PC-9 (cell line): ENCODE measurements at regions of chr1 and their contacts with region 1.

Region 1: DNA sequence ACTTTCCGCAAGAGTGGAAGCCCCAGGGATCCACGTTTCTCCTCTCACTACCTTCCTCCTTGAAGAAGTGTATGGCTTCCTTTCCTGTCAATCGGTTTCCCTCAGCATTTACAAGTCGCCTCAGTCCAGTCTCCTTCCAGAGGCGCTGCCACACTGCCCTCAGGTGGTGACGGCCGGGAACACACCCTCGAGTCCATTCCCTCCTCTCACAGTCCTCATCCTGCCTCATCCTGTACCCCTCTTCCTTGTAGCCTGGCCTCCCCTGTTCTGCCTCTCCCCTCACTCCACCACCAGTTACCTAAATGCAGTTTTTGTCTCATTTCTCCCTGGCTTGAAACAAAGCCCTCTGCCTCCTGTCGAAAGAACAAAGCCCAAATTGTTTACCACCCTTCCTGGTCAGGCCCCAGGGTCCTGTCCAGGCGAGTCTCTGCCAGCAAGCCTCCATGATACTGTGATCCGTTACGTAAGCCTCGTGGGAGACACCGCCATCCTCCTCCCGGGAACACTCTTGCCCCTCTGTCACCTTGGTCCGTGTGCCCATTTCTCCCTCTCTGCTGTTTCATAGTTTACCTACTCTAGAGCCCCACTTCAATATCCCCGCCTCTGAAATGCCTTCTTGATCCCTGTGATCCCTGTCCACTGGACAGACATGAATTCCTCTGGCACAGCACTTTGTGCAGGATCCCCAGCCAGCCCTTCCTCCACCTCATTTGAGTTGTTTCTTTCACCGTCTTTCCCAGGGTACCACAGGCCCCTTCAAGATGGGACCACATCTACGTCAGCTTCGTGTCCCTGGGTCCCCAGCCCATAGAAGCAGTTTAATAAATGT is 23.3 kb upstream of the LSM10 start:
- DNase-seq: peak; percentile 72 to 93
- H3K4me3 ChIP-seq: no peak overlapping the region
- H3K27ac ChIP-seq: no peak overlapping the region
- H3K4me1 ChIP-seq: peaks cover 23% of the 10 kb centered on the region
- H3K27me3 ChIP-seq: no peaks in the 10 kb centered on the region
- CTCF ChIP-seq: peak; percentile 91

Region 2: GRCh38 chr1:35769759-35770446 is 651.1 kb before region 1 on chr1 and contains the start of gene CLSPN:
- CTCF ChIA-PET with region 1: interaction called, 19 read pairs
- POLR2A ChIA-PET with region 1: no interaction called
- intact Hi-C with region 1: no loop called
- DNase-seq: peak; percentile 90 to 98
- H3K4me3 ChIP-seq: peak within 1 kb of the TSS; percentile 99
- H3K27ac ChIP-seq: no peak within 1 kb of the TSS
- H3K4me1 ChIP-seq: peaks cover 5% of the 10 kb centered on the region; the same call in 1 of the 2 replicates
- H3K27me3 ChIP-seq: no peaks in the 10 kb centered on the region
- CTCF ChIP-seq: no peak
- total RNA-seq, gene CLSPN: 18.9 and 26.7 TPM in 2 replicates

Region 3: DNA sequence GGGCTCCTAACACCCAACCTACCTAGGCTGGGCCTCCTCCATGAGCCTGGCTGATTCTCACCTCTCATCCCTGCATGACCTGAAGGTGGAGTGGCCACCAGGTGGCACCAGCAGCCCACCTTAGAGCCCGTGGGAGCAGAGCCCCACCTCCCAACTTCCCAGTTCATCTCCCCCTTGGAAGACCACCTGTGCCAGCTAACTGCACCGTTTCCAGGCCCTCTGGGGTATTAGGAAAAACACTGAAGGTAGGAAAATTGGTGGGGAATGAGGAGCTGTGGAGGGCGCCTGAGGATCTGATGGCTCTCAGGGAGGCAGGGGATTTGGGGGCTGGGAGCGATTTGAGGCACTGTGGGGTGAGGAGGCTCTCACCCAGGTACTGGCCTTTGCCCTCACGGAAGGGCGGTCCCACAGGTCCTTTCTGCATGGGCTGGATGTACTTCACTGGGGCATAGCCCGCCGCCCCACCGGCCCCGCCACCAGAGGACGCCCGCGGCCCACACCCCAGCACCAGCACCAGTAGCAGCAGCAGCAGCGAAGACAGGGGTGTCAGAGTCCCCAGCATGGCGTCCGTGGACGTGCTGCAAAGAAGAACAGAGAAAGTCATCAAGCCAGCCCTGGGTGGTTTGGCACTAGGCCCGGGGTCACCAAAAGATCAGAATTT is 321.2 kb before region 1 on chr1:
- CTCF ChIA-PET with region 1: interaction called, 14 read pairs
- POLR2A ChIA-PET with region 1: no interaction called
- intact Hi-C with region 1: loop called (anchors 1 kb)
- DNase-seq: peak; percentile 71 to 94
- H3K4me3 ChIP-seq: no peak overlapping the region
- H3K27ac ChIP-seq: no peak overlapping the region
- H3K4me1 ChIP-seq: peaks cover 4% of the 10 kb centered on the region; the same call in 1 of the 2 replicates
- H3K27me3 ChIP-seq: no peaks in the 10 kb centered on the region
- CTCF ChIP-seq: peak; percentile 91

Region 4: DNA sequence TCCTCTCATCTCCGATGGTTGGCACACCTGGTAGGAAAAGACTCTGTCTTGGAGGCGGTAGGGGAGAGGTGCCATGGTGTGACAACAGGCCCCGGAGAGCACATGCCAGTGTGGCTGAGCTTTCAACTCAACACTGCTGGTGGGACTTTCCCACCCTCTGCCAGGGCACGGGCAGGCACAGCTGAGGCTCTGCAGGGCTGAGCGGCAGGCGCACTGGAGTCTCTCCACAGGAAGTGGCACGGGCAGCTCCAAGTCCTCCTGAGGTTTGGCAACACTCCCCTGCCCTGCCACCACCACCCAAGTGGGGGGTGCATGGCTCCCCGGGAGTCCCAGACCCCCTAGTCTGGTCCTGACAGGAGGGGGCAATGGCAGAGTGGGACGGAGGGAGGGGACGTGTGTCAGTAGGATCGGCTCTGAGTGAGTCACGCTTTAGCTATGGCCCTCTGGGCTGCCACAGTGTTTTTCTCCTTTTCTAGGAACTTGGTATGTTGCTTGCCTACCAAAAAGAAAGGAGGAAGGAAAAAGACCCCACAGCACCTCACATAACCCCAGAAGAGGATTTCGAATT is 70.3 kb before region 1 on chr1:
- CTCF ChIA-PET with region 1: no interaction called
- POLR2A ChIA-PET with region 1: no interaction called
- intact Hi-C with region 1: loop called (anchors 2 kb)
- DNase-seq: peak; percentile 89 to 91
- H3K4me3 ChIP-seq: peak overlapping the region; percentile 41; the same call in 1 of the 2 replicates
- H3K27ac ChIP-seq: peak overlapping the region; percentile 97
- H3K4me1 ChIP-seq: peaks cover 67% of the 10 kb centered on the region
- H3K27me3 ChIP-seq: no peaks in the 10 kb centered on the region
- CTCF ChIP-seq: no peak

Region 5: GRCh38 chr1:36442310-36442709 is 21.3 kb after region 1 on chr1:
- CTCF ChIA-PET with region 1: interaction called, 11 read pairs
- POLR2A ChIA-PET with region 1: no interaction called
- intact Hi-C with region 1: no loop called
- DNase-seq: no peak
- H3K4me3 ChIP-seq: no peak overlapping the region
- H3K27ac ChIP-seq: peak overlapping the region; percentile 24; the same call in 1 of the 2 replicates
- H3K4me1 ChIP-seq: peaks cover 7% of the 10 kb centered on the region
- H3K27me3 ChIP-seq: no peaks in the 10 kb centered on the region
- CTCF ChIP-seq: no peak